Right lobe of liver (tissue), 6 donors: ENCODE measurements at regions of chr1 and their contacts with region 1.

Region 1: GRCh38 chr1:112803906-112804762 is 89.0 kb upstream of the PPM1J start:
- DNase-seq: peak; percentile 77 to 86 (median 81)
- ATAC-seq: peak; percentile 94 to 100 (median 98)
- H3K4me3 ChIP-seq: no peak overlapping the region
- H3K27ac ChIP-seq: no peak overlapping the region
- H3K4me1 ChIP-seq: no peaks in the 10 kb centered on the region
- H3K27me3 ChIP-seq: no peaks in the 10 kb centered on the region
- CTCF ChIP-seq: peak; percentile 73 to 88 (median 82)
- POLR2A ChIP-seq: no peak

Region 2: GRCh38 chr1:112715264-112716053 is 88.7 kb before region 1 on chr1 and contains the start of gene PPM1J:
- intact Hi-C with region 1: loop called (anchors 2 to 5 kb)
- DNase-seq: peak; percentile 99 to 100 (median 100)
- ATAC-seq: peak; percentile 85 to 91 (median 87)
- H3K4me3 ChIP-seq: peak within 1 kb of the TSS; percentile 49 to 61 (median 58)
- H3K27ac ChIP-seq: peak within 1 kb of the TSS in 2 of 3 donors; percentile 48 to 55
- H3K4me1 ChIP-seq: peaks cover 0 to 25% (median 7%) of the 10 kb centered on the region in 4 donors
- H3K27me3 ChIP-seq: no peaks in the 10 kb centered on the region
- CTCF ChIP-seq: no peak
- POLR2A ChIP-seq: peak; percentile 42
- total RNA-seq, gene PPM1J: 0.15 to 1.2 (median 0.40) TPM

Region 3: GRCh38 chr1:112721966-112722524 is 82.1 kb before region 1 on chr1:
- intact Hi-C with region 1: loop called (anchors 2 to 5 kb)
- DNase-seq: no peak
- ATAC-seq: no peak
- H3K4me3 ChIP-seq: no peak overlapping the region
- H3K27ac ChIP-seq: no peak overlapping the region
- H3K4me1 ChIP-seq: peaks cover 0 to 6% (median 2%) of the 10 kb centered on the region in 4 donors
- H3K27me3 ChIP-seq: no peaks in the 10 kb centered on the region
- CTCF ChIP-seq: no peak
- POLR2A ChIP-seq: no peak

Region 4: GRCh38 chr1:112934577-112934976 is 130.4 kb after region 1 on chr1:
- intact Hi-C with region 1: no loop called
- DNase-seq: no peak
- ATAC-seq: peak in 3 of 4 donors; percentile 32 to 48 (median 37)
- H3K4me3 ChIP-seq: no peak overlapping the region
- H3K27ac ChIP-seq: no peak overlapping the region
- H3K4me1 ChIP-seq: peaks cover 0 to 29% (median 4%) of the 10 kb centered on the region in 4 donors
- H3K27me3 ChIP-seq: no peaks in the 10 kb centered on the region
- CTCF ChIP-seq: no peak
- POLR2A ChIP-seq: no peak

Region 5: DNA sequence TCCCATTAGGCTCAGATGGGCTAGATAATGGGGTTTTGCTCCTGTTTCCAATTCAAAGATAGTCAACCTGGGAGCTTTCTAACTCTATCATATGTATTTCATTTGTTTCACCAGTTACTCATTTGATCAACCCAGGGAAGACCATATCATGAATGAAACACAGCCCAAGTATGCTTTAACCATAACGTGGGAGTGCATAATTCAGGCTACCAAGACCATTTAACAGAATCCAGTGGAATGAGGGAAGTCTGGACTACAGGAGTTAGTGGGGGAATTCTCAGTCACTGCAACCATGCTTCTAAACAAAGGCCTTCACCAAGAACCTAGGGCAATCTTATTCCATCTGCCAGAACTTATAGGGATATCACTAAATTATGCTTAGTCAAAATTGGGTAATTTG is 166.9 kb after region 1 on chr1:
- intact Hi-C with region 1: no loop called
- DNase-seq: no peak
- ATAC-seq: no peak
- H3K4me3 ChIP-seq: no peak overlapping the region
- H3K27ac ChIP-seq: no peak overlapping the region
- H3K4me1 ChIP-seq: no peaks in the 10 kb centered on the region
- H3K27me3 ChIP-seq: no peaks in the 10 kb centered on the region
- CTCF ChIP-seq: no peak
- POLR2A ChIP-seq: no peak